Sigmoid colon (tissue), 7 donors: ENCODE measurements at regions of chr18 and their contacts with region 1.

Region 1: DNA sequence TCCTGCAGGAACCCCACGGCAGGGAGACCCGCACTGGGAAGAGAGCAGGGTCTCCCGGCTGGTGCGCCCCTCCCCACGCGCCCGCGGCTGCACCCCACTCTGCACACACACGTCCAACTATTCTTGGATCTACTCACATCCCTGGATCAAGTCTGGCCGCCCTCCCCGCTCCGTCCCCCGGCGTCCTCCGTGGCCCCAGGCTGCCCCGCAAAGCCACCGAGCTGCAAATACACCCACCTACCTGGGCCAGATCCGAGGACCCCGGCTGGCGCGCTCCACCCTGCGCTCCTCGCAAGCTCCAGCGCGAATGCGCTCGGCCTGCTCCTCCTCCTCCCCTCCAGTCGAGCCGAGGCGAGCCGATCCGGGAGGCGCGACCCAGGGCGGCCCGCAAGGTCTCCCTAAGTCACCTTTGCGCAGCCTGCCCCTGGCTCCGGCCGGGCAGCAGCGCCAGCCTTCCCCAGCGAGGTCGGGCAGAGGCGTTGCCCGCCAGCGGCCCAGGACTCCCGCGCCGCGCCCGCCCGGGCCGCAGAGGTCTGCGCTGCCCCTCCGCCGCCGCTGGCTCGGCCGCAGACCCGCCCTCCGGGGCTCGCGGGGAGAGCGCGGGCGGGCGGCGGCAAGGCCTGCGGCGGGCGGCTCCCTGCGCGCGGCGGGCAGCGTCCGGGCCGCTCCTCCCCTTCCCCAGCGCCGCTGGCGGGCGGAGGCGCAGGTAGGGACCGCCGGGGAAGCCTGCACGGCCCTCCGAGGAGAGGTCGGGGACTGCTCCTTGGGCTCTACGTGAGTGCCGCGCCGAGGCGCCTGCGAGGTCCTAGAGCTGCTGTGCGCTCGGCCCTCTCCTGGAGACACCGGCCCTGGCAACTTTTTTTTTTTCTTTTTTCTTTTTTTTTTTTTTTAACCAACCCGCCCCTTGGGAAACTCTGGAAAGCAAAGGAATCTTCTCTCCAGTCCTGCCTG is 126.0 kb downstream of the OSBPL1A start:
- DNase-seq: peak; percentile 87
- H3K4me3 ChIP-seq: peak overlapping the region; percentile 49 to 93 (median 82)
- H3K27ac ChIP-seq: peak overlapping the region; percentile 92 to 94 (median 93)
- H3K4me1 ChIP-seq: peaks cover 0 to 32% (median 19%) of the 10 kb centered on the region in 4 donors
- H3K27me3 ChIP-seq: no peaks in the 10 kb centered on the region
- CTCF ChIP-seq: peak in 1 of 4 experiments; percentile 32
- EP300 ChIP-seq: no peak
- POLR2A ChIP-seq: no peak

Region 2: GRCh38 chr18:23828426-23828825 is 443.2 kb before region 1 on chr18:
- intact Hi-C with region 1: loop called (anchors 5 kb)
- DNase-seq: no peak
- H3K4me3 ChIP-seq: no peak overlapping the region
- H3K27ac ChIP-seq: no peak overlapping the region
- H3K4me1 ChIP-seq: peaks cover 0 to 26% (median 24%) of the 10 kb centered on the region in 4 donors
- H3K27me3 ChIP-seq: no peaks in the 10 kb centered on the region
- CTCF ChIP-seq: no peak
- EP300 ChIP-seq: no peak
- POLR2A ChIP-seq: no peak

Region 3: GRCh38 chr18:24176727-24177416 is 94.8 kb before region 1 on chr18:
- intact Hi-C with region 1: loop called (anchors 1 kb)
- DNase-seq: peak; percentile 83
- H3K4me3 ChIP-seq: no peak overlapping the region
- H3K27ac ChIP-seq: no peak overlapping the region
- H3K4me1 ChIP-seq: peaks cover 0 to 7% (median 0%) of the 10 kb centered on the region in 4 donors
- H3K27me3 ChIP-seq: no peaks in the 10 kb centered on the region
- CTCF ChIP-seq: peak; percentile 57 to 76 (median 61)
- EP300 ChIP-seq: no peak
- POLR2A ChIP-seq: no peak

Region 4: GRCh38 chr18:24219561-24220317 is 51.9 kb before region 1 on chr18:
- intact Hi-C with region 1: loop called (anchors 5 kb)
- DNase-seq: no peak
- H3K4me3 ChIP-seq: no peak overlapping the region
- H3K27ac ChIP-seq: no peak overlapping the region
- H3K4me1 ChIP-seq: peaks cover 0 to 34% (median 22%) of the 10 kb centered on the region in 4 donors
- H3K27me3 ChIP-seq: no peaks in the 10 kb centered on the region
- CTCF ChIP-seq: no peak
- EP300 ChIP-seq: no peak
- POLR2A ChIP-seq: no peak

Region 5: GRCh38 chr18:24426398-24427294 is 155.0 kb after region 1 on chr18 and contains the start of gene IMPACT:
- intact Hi-C with region 1: loop called (anchors 10 kb)
- DNase-seq: peak; percentile 89
- H3K4me3 ChIP-seq: peak within 1 kb of the TSS; percentile 83 to 90 (median 85)
- H3K27ac ChIP-seq: peak within 1 kb of the TSS; percentile 81 to 90 (median 87)
- H3K4me1 ChIP-seq: peaks cover 0 to 11% (median 8%) of the 10 kb centered on the region in 4 donors
- H3K27me3 ChIP-seq: peaks cover 0 to 18% (median 0%) of the 10 kb centered on the region in 3 donors
- CTCF ChIP-seq: no peak
- EP300 ChIP-seq: no peak
- POLR2A ChIP-seq: peak in 1 of 2 donors; percentile 9
- total RNA-seq, gene IMPACT: 15.6 to 24.6 (median 19.1) TPM